ENCODE measurements at regions of chr21 and their contacts with region 1.

Region 1: GRCh38 chr21:42129300-42130266 is 58.5 kb downstream of the UMODL1 start:
- DNase-seq: no peak
- ATAC-seq: no peak
- H3K4me3 Mint-ChIP-seq: no peak overlapping the region
- H3K27ac Mint-ChIP-seq: no peak overlapping the region
- H3K4me1 Mint-ChIP-seq: no peaks in the 10 kb centered on the region
- H3K27me3 Mint-ChIP-seq: peaks cover 3% of the 10 kb centered on the region

Region 2: GRCh38 chr21:42117229-42117966 is 12.2 kb before region 1 on chr21:
- CTCF ChIA-PET with region 1: interaction called, 12 read pairs
- POLR2A ChIA-PET with region 1: no interaction called
- intact Hi-C with region 1: no loop called
- DNase-seq: peak; percentile 86
- ATAC-seq: peak; percentile 88
- H3K4me3 Mint-ChIP-seq: no peak overlapping the region
- H3K27ac Mint-ChIP-seq: no peak overlapping the region
- H3K4me1 Mint-ChIP-seq: peaks cover 10% of the 10 kb centered on the region
- H3K27me3 Mint-ChIP-seq: peaks cover 43% of the 10 kb centered on the region